Naive thymus-derived CD4-positive, alpha-beta T cell (primary cell): ENCODE measurements at regions of chr11 and their contacts with region 1.

Region 1: GRCh38 chr11:1882519-1883238 is 9.0 kb downstream of the PRR33 start:
- DNase-seq: peak; percentile 65 to 87 (median 80)
- ATAC-seq: peak; percentile 89
- H3K4me3 ChIP-seq: no peak overlapping the region
- H3K4me3 Mint-ChIP-seq: no peak overlapping the region
- H3K27ac ChIP-seq: peak overlapping the region; percentile 46
- H3K27ac Mint-ChIP-seq: peak overlapping the region in 4 of 9 donors; percentile 20 to 60 (median 48)
- H3K4me1 ChIP-seq: peaks cover 0 to 3% of the 10 kb centered on the region in 2 donors
- H3K4me1 Mint-ChIP-seq: peaks cover 6 to 27% (median 13%) of the 10 kb centered on the region in 7 donors
- H3K27me3 ChIP-seq: no peaks in the 10 kb centered on the region
- H3K27me3 Mint-ChIP-seq: no peaks in the 10 kb centered on the region

Region 2: GRCh38 chr11:1837171-1838076 is 45.3 kb before region 1 on chr11:
- CTCF ChIA-PET with region 1: interaction called, 9 read pairs
- POLR2A ChIA-PET with region 1: interaction called, 4 read pairs
- intact Hi-C with region 1: loop called in 1 of 2 experiments (anchors 1 kb)
- DNase-seq: peak; percentile 53 to 83 (median 75)
- ATAC-seq: peak; percentile 84
- H3K4me3 ChIP-seq: no peak overlapping the region
- H3K4me3 Mint-ChIP-seq: peak overlapping the region in 1 of 10 donors; percentile 14
- H3K27ac ChIP-seq: no peak overlapping the region
- H3K27ac Mint-ChIP-seq: peak overlapping the region in 1 of 9 donors; percentile 19
- H3K4me1 ChIP-seq: peaks cover 0 to 7% of the 10 kb centered on the region in 2 donors
- H3K4me1 Mint-ChIP-seq: peaks cover 0 to 11% (median 7%) of the 10 kb centered on the region in 7 donors
- H3K27me3 ChIP-seq: no peaks in the 10 kb centered on the region
- H3K27me3 Mint-ChIP-seq: peaks cover 0 to 3% (median 0%) of the 10 kb centered on the region in 5 donors

Region 3: GRCh38 chr11:1870721-1871466 is 11.8 kb before region 1 on chr11:
- CTCF ChIA-PET with region 1: interaction called, 7 read pairs
- POLR2A ChIA-PET with region 1: interaction called, 15 read pairs
- intact Hi-C with region 1: no loop called
- DNase-seq: peak in 7 of 9 donors; percentile 37 to 60 (median 50)
- ATAC-seq: peak; percentile 77
- H3K4me3 ChIP-seq: peak overlapping the region; percentile 51
- H3K4me3 Mint-ChIP-seq: peak overlapping the region; percentile 62 to 89 (median 82)
- H3K27ac ChIP-seq: peak overlapping the region; percentile 49
- H3K27ac Mint-ChIP-seq: peak overlapping the region; percentile 56 to 96 (median 93)
- H3K4me1 ChIP-seq: peaks cover 36 to 47% of the 10 kb centered on the region in 2 donors
- H3K4me1 Mint-ChIP-seq: peaks cover 30 to 64% (median 49%) of the 10 kb centered on the region in 7 donors
- H3K27me3 ChIP-seq: no peaks in the 10 kb centered on the region
- H3K27me3 Mint-ChIP-seq: no peaks in the 10 kb centered on the region

Region 4: DNA sequence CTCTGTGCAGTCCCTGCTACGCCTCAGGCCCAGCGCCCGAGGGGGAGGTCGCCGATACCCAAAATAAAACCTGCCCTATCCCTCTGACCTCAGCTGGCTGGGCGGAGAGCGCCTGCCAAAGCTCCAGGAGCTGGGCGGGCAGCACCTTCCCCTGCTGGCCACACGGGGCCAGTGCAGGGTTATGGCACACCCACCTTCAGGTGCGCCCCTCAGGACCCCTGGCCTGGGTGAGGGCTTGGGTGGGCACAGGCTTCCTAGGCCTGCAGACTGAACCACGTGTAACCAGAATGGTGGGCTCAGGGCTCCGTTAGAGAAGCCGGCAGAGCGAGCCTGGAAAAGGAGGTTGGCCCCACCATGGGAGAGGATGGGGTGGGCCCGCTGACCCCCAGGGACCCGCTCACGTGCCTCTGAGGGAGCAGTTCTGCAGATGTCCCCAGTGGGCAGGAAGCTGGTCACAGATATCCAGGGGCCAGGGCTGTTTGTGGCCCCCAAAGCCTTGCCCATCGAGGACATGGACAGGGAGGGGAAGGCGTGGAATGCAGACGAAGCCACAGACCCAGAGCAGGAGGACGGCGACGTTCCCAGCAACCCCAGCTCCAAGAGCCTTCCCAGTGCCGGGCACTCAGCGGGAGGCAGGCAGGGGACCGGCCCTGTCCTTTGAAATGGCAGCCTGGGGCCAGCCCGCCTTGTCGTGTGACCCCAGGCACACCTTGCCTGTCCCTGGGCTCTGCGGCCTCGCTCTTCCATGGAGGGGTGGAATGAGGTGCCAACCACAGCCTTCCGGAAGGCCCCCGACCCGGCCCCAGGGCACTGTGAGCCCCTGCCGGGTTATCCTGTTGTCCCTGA is 35.2 kb after region 1 on chr11:
- CTCF ChIA-PET with region 1: interaction called, 5 read pairs
- POLR2A ChIA-PET with region 1: interaction called, 7 read pairs
- intact Hi-C with region 1: loop called (anchors 5 kb)
- DNase-seq: peak in 1 of 9 donors; percentile 19
- ATAC-seq: peak; percentile 50
- H3K4me3 ChIP-seq: no peak overlapping the region
- H3K4me3 Mint-ChIP-seq: no peak overlapping the region
- H3K27ac ChIP-seq: no peak overlapping the region
- H3K27ac Mint-ChIP-seq: peak overlapping the region in 1 of 9 donors; percentile 5
- H3K4me1 ChIP-seq: no peaks in the 10 kb centered on the region
- H3K4me1 Mint-ChIP-seq: peaks cover 9 to 32% (median 15%) of the 10 kb centered on the region in 7 donors
- H3K27me3 ChIP-seq: no peaks in the 10 kb centered on the region
- H3K27me3 Mint-ChIP-seq: peaks cover 0 to 15% (median 11%) of the 10 kb centered on the region in 5 donors

Region 5: GRCh38 chr11:2002807-2003206 is 120.1 kb after region 1 on chr11:
- CTCF ChIA-PET with region 1: interaction called, 10 read pairs
- POLR2A ChIA-PET with region 1: no interaction called
- intact Hi-C with region 1: no loop called
- DNase-seq: no peak
- ATAC-seq: peak; percentile 66
- H3K4me3 ChIP-seq: no peak overlapping the region
- H3K4me3 Mint-ChIP-seq: no peak overlapping the region
- H3K27ac ChIP-seq: no peak overlapping the region
- H3K27ac Mint-ChIP-seq: no peak overlapping the region
- H3K4me1 ChIP-seq: no peaks in the 10 kb centered on the region
- H3K4me1 Mint-ChIP-seq: no peaks in the 10 kb centered on the region
- H3K27me3 ChIP-seq: no peaks in the 10 kb centered on the region
- H3K27me3 Mint-ChIP-seq: no peaks in the 10 kb centered on the region

Region 6: GRCh38 chr11:2151500-2152257 is 269.0 kb after region 1 on chr11:
- CTCF ChIA-PET with region 1: interaction called, 4 read pairs
- POLR2A ChIA-PET with region 1: interaction called, 3 read pairs
- intact Hi-C with region 1: loop called in 1 of 2 experiments (anchors 1 kb)
- DNase-seq: peak; percentile 58 to 83 (median 78)
- ATAC-seq: peak; percentile 89
- H3K4me3 ChIP-seq: peak overlapping the region; percentile 44
- H3K4me3 Mint-ChIP-seq: peak overlapping the region in 9 of 10 donors; percentile 20 to 71 (median 58)
- H3K27ac ChIP-seq: no peak overlapping the region
- H3K27ac Mint-ChIP-seq: peak overlapping the region in 4 of 9 donors; percentile 25 to 63 (median 32)
- H3K4me1 ChIP-seq: peaks cover 6% of the 10 kb centered on the region in 2 donors
- H3K4me1 Mint-ChIP-seq: peaks cover 0 to 12% (median 6%) of the 10 kb centered on the region in 7 donors
- H3K27me3 ChIP-seq: peaks cover 0 to 8% of the 10 kb centered on the region in 2 donors
- H3K27me3 Mint-ChIP-seq: peaks cover 18 to 40% (median 38%) of the 10 kb centered on the region in 5 donors